Natural killer cell (primary cell): ENCODE measurements at regions of chr16 and their contacts with region 1.

Region 1: GRCh38 chr16:81873843-81874752 is 95.0 kb downstream of the PLCG2 start:
- DNase-seq: peak; percentile 69 to 70
- ATAC-seq: peak; percentile 89 to 94 (median 92)
- H3K4me3 ChIP-seq: no peak overlapping the region
- H3K4me3 Mint-ChIP-seq: peak overlapping the region; percentile 45
- H3K27ac ChIP-seq: no peak overlapping the region
- H3K27ac Mint-ChIP-seq: peak overlapping the region; percentile 65 to 82
- H3K4me1 ChIP-seq: peaks cover 25% of the 10 kb centered on the region
- H3K4me1 Mint-ChIP-seq: peaks cover 32 to 40% of the 10 kb centered on the region in 2 donors
- H3K27me3 ChIP-seq: no peaks in the 10 kb centered on the region
- H3K27me3 Mint-ChIP-seq: no peaks in the 10 kb centered on the region
- CTCF ChIP-seq: peak; percentile 93

Region 2: GRCh38 chr16:81366316-81366932 is 507.7 kb before region 1 on chr16:
- intact Hi-C with region 1: loop called (anchors 5 kb)
- DNase-seq: peak in 1 of 2 donors; percentile 75
- ATAC-seq: peak; percentile 82 to 88 (median 85)
- H3K4me3 ChIP-seq: no peak overlapping the region
- H3K4me3 Mint-ChIP-seq: no peak overlapping the region
- H3K27ac ChIP-seq: no peak overlapping the region
- H3K27ac Mint-ChIP-seq: no peak overlapping the region
- H3K4me1 ChIP-seq: peaks cover 9% of the 10 kb centered on the region
- H3K4me1 Mint-ChIP-seq: peaks cover 14 to 15% of the 10 kb centered on the region in 2 donors
- H3K27me3 ChIP-seq: no peaks in the 10 kb centered on the region
- H3K27me3 Mint-ChIP-seq: no peaks in the 10 kb centered on the region
- CTCF ChIP-seq: peak; percentile 77

Region 3: GRCh38 chr16:81737885-81738786 is 136.0 kb before region 1 on chr16:
- intact Hi-C with region 1: loop called (anchors 5 kb)
- DNase-seq: peak; percentile 80 to 93
- ATAC-seq: peak; percentile 89 to 97 (median 96)
- H3K4me3 ChIP-seq: peak overlapping the region; percentile 11
- H3K4me3 Mint-ChIP-seq: peak overlapping the region; percentile 58
- H3K27ac ChIP-seq: no peak overlapping the region
- H3K27ac Mint-ChIP-seq: peak overlapping the region in 1 of 2 donors; percentile 75
- H3K4me1 ChIP-seq: peaks cover 35% of the 10 kb centered on the region
- H3K4me1 Mint-ChIP-seq: peaks cover 7 to 19% of the 10 kb centered on the region in 2 donors
- H3K27me3 ChIP-seq: no peaks in the 10 kb centered on the region
- H3K27me3 Mint-ChIP-seq: no peaks in the 10 kb centered on the region
- CTCF ChIP-seq: peak; percentile 88

Region 4: GRCh38 chr16:81798311-81799137 is 75.6 kb before region 1 on chr16:
- intact Hi-C with region 1: loop called (anchors 5 kb)
- DNase-seq: peak; percentile 29 to 40
- ATAC-seq: peak; percentile 35 to 45 (median 39)
- H3K4me3 ChIP-seq: no peak overlapping the region
- H3K4me3 Mint-ChIP-seq: peak overlapping the region; percentile 67
- H3K27ac ChIP-seq: peak overlapping the region; percentile 93
- H3K27ac Mint-ChIP-seq: peak overlapping the region; percentile 92 to 99
- H3K4me1 ChIP-seq: peaks cover 49% of the 10 kb centered on the region
- H3K4me1 Mint-ChIP-seq: peaks cover 68 to 73% of the 10 kb centered on the region in 2 donors
- H3K27me3 ChIP-seq: no peaks in the 10 kb centered on the region
- H3K27me3 Mint-ChIP-seq: no peaks in the 10 kb centered on the region
- CTCF ChIP-seq: no peak

Region 5: DNA sequence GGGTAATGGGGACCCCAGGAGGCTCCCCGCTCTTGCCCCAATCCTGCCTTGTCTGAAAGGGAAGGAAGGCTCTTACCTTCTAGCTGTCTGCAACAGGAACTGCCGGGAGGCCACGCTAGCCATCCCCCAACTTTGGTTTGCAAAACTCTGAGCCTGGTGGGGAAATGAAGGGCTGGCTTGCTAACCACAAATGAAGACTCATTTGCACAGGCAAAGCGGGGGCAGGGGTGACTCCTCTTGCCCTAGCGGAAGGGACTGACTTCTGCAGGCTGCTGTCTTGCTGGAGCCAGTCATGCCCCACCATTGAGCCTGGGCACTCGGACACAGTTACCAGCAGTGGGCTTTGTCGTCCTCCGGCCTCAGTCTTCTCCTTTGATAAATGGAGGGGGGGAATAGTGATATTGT is 42.4 kb before region 1 on chr16:
- intact Hi-C with region 1: loop called (anchors 5 kb)
- DNase-seq: peak; percentile 72 to 79
- ATAC-seq: peak; percentile 75 to 92 (median 85)
- H3K4me3 ChIP-seq: peak overlapping the region; percentile 43
- H3K4me3 Mint-ChIP-seq: peak overlapping the region; percentile 72
- H3K27ac ChIP-seq: peak overlapping the region; percentile 92
- H3K27ac Mint-ChIP-seq: peak overlapping the region; percentile 96 to 98
- H3K4me1 ChIP-seq: peaks cover 98% of the 10 kb centered on the region
- H3K4me1 Mint-ChIP-seq: peaks cover 76 to 84% of the 10 kb centered on the region in 2 donors
- H3K27me3 ChIP-seq: no peaks in the 10 kb centered on the region
- H3K27me3 Mint-ChIP-seq: no peaks in the 10 kb centered on the region
- CTCF ChIP-seq: peak; percentile 25

Region 6: GRCh38 chr16:81855552-81856153 is 18.4 kb before region 1 on chr16:
- intact Hi-C with region 1: no loop called
- DNase-seq: no peak
- ATAC-seq: no peak
- H3K4me3 ChIP-seq: no peak overlapping the region
- H3K4me3 Mint-ChIP-seq: no peak overlapping the region
- H3K27ac ChIP-seq: no peak overlapping the region
- H3K27ac Mint-ChIP-seq: peak overlapping the region; percentile 7 to 70
- H3K4me1 ChIP-seq: peaks cover 30% of the 10 kb centered on the region
- H3K4me1 Mint-ChIP-seq: peaks cover 48 to 52% of the 10 kb centered on the region in 2 donors
- H3K27me3 ChIP-seq: no peaks in the 10 kb centered on the region
- H3K27me3 Mint-ChIP-seq: no peaks in the 10 kb centered on the region
- CTCF ChIP-seq: no peak